Left colon (tissue), 2 donors: ENCODE measurements at regions of chr1 and their contacts with region 1.

Region 1: GRCh38 chr1:234499119-234499942 is 20.4 kb upstream of the TARBP1 start:
- DNase-seq: peak; percentile 83 to 94
- ATAC-seq: peak; percentile 99

Region 2: DNA sequence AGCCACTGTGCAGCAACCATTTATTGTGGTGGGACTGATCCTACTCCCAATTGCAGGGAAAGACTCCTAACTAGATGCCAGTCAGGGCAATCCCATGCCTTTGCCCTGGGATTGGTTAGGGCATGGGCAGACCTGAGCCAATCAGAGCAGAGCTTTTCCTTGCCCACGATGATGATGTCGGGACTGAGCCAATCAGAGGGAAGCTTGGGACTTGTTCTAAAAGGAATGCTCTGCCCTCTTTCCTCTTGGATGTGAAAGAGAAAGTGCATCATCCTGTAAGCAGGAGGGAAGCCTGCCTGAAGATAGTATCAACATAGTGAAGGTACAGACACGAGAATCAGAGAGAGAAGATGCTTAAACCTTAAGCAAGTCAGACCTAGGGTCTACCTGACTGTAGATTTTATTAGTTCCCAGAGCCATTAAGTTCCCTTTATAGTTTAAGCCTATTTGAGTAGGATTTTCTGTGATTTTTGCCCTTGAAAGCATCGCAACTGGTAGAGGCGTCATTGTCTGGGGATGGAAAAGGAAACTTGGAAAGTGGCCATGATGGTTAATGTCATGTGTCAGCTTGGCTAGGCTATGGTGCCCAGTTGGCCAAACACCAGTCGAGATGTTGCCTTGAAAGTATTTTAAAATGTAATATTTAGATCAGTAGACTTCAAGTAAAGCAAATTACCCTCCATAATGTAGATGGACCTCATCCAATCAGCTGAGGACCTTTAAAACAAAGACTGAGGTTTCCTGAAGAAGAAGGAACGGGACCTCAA is 90.7 kb after region 1 on chr1:
- intact Hi-C with region 1: loop called (anchors 5 kb)
- DNase-seq: no peak
- ATAC-seq: peak; percentile 20

Region 3: DNA sequence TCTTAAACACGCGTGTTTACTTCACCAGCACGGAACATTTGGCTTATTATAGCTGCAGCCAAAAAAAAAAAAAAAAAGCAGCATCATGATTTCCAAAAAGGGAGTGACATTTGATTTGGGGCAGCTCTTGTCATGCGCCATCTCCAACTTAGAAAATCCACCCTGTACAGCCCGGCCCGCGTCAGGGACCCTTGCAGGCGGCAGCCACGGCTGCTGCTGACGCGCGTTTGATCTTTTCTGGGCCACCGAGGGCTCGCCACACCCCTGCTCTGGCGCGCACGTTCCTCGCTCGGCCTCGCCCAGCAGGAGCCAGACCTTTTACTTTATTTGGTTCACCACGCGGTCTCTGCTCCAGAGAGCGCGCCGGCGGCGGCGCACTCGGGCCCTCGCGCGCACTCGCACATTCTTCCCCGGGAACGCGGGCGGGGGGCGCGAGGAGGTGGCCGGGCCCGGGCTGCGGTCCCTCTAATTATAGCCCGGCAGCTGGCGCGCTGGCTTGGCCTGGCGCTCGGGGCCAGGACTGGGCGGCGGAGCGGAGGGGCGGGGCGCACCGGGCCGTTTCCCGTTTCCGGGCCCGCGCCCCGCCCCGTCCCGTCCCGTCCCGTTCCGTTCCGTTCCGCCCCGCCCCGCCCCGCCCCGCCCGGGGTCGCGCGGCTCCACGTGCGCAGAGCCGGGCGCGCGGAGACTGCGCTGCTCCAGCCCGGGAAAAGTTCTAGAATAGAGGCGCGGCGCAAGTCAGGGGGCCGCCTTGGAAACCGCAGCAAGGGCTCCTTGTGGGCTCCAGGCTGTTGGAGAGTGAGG is 100.5 kb after region 1 on chr1:
- intact Hi-C with region 1: loop called in 1 of 2 experiments (anchors 5 kb)
- DNase-seq: peak; percentile 88 to 91
- ATAC-seq: peak; percentile 74

Region 4: GRCh38 chr1:234978397-234979295 is 479.3 kb after region 1 on chr1:
- intact Hi-C with region 1: loop called in 1 of 2 experiments (anchors 10 kb)
- DNase-seq: peak; percentile 77 to 89
- ATAC-seq: peak; percentile 69

Region 5: DNA sequence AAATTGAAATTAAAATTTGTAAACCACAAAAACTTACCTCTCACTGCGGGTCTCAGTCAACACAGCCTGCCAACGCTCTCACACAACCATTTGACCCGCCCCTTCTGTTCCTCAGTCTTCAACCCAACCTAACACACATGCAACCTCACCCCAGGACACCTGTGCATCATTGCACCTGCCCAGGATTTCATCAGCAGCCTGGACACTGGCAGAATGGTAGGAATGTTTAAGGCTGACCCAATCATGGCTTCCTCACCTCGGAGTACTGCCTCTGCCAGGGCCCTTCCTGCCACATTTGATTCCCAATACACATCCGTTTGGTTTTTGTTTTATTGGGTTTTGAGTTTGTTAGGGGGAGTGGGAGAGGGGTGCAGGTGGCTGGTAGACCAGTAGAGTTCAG is 588.6 kb after region 1 on chr1:
- intact Hi-C with region 1: loop called (anchors 5 kb)
- DNase-seq: peak in 1 of 2 donors; percentile 25
- ATAC-seq: no peak